Natural killer cell (primary cell): ENCODE measurements at regions of chr1 and their contacts with region 1.

Region 1: GRCh38 chr1:227486559-227486958 is 76.8 kb upstream of the ZNF678 start:
- DNase-seq: no peak
- ATAC-seq: no peak
- H3K4me3 ChIP-seq: no peak overlapping the region
- H3K4me3 Mint-ChIP-seq: no peak overlapping the region
- H3K27ac ChIP-seq: no peak overlapping the region
- H3K27ac Mint-ChIP-seq: no peak overlapping the region
- H3K4me1 ChIP-seq: no peaks in the 10 kb centered on the region
- H3K4me1 Mint-ChIP-seq: no peaks in the 10 kb centered on the region
- H3K27me3 ChIP-seq: peaks cover 4% of the 10 kb centered on the region
- H3K27me3 Mint-ChIP-seq: peaks cover 5 to 14% of the 10 kb centered on the region in 2 donors
- CTCF ChIP-seq: no peak

Region 2: DNA sequence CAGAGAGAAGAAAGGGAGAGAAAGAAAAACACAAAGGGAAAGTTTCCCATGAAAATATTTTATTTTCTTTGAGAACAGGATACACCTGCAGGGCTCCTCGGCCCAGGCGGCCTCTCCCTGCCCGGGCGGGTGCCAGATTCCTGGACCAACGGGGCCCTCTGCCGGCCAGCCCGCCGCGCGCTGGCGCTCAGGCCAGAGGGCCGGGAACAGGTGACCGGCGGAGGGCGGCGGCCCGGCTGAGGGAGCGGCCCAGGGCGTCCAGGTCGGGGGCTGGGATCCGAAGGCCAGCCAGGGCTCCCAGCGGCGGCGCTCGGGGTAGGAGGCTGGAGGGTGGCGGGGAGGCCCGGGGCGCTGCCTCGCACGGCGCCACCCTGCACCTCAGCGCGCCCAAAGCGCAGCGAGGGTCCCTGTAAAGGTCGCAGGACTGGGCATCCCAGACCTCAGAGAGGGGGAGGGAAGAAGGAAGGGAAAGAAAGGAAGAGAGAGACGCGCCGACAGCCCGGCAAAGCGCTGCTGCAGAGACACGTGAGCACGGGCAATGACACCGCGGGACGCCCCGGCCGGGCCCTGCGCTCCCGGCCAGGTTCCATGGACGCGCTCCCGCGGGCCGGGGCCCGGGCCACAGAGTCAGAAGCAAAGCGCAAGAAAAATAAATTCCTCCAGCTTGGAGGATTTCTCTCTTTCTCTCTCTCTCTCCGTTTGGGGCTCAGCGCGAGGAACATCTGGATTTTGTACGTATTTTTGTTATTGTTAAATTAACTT is 460.2 kb after region 1 on chr1:
- intact Hi-C with region 1: loop called (anchors 1 kb)
- DNase-seq: peak; percentile 39 to 74
- ATAC-seq: peak in 2 of 3 donors; percentile 72 to 83
- H3K4me3 ChIP-seq: no peak overlapping the region
- H3K4me3 Mint-ChIP-seq: peak overlapping the region; percentile 80
- H3K27ac ChIP-seq: no peak overlapping the region
- H3K27ac Mint-ChIP-seq: no peak overlapping the region
- H3K4me1 ChIP-seq: peaks cover 16% of the 10 kb centered on the region
- H3K4me1 Mint-ChIP-seq: peaks cover 8 to 16% of the 10 kb centered on the region in 2 donors
- H3K27me3 ChIP-seq: peaks cover 26% of the 10 kb centered on the region
- H3K27me3 Mint-ChIP-seq: peaks cover 22 to 44% of the 10 kb centered on the region in 2 donors
- CTCF ChIP-seq: peak; percentile 55

Region 3: GRCh38 chr1:227954163-227954850 is 467.7 kb after region 1 on chr1:
- intact Hi-C with region 1: loop called (anchors 2 kb)
- DNase-seq: no peak
- ATAC-seq: no peak
- H3K4me3 ChIP-seq: no peak overlapping the region
- H3K4me3 Mint-ChIP-seq: no peak overlapping the region
- H3K27ac ChIP-seq: no peak overlapping the region
- H3K27ac Mint-ChIP-seq: no peak overlapping the region
- H3K4me1 ChIP-seq: no peaks in the 10 kb centered on the region
- H3K4me1 Mint-ChIP-seq: no peaks in the 10 kb centered on the region
- H3K27me3 ChIP-seq: peaks cover 3% of the 10 kb centered on the region
- H3K27me3 Mint-ChIP-seq: peaks cover 28 to 35% of the 10 kb centered on the region in 2 donors
- CTCF ChIP-seq: peak; percentile 8

Region 4: DNA sequence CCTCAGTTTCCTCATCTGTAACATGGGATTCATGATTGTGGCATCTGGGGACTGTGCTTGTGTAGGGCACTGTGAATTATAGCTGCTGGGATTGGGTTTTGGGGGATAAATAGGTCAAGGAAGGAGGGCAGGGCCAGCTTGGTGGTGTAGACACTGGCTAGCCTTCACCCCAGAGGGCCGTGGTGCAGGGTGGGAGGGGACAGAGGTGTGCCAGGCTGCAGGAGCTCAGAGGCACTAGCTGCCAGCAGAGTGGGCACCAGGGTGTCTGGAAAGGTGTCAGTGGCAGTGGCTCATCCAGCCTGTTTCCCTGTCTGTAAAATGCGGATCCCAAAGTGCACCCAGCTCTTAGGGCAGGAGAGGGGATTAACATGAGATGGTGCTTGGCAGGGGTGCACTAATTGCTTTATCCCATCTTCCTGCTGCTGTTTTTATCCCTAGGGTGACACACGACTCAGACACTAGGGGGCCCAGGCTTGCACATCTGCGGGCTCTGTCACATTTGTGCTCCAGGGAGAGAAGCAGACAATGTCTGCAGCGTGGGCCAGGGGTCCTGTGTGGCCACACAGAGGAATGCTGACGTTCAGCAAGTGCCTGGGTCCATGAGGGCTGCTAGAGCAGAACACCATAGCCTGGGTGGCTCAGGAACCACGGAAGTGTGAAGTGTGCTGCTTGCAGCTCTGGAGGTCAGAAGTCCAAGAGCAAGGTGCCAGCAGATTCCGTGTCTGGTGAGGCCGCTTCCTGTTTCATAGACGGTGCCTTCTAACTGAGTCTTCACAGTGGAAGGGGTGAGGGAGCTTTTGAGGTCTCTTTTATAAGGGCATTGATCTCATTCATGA is 740.6 kb after region 1 on chr1:
- intact Hi-C with region 1: no loop called
- DNase-seq: no peak
- ATAC-seq: no peak
- H3K4me3 ChIP-seq: no peak overlapping the region
- H3K4me3 Mint-ChIP-seq: no peak overlapping the region
- H3K27ac ChIP-seq: no peak overlapping the region
- H3K27ac Mint-ChIP-seq: no peak overlapping the region
- H3K4me1 ChIP-seq: no peaks in the 10 kb centered on the region
- H3K4me1 Mint-ChIP-seq: no peaks in the 10 kb centered on the region
- H3K27me3 ChIP-seq: no peaks in the 10 kb centered on the region
- H3K27me3 Mint-ChIP-seq: no peaks in the 10 kb centered on the region
- CTCF ChIP-seq: no peak

Region 5: DNA sequence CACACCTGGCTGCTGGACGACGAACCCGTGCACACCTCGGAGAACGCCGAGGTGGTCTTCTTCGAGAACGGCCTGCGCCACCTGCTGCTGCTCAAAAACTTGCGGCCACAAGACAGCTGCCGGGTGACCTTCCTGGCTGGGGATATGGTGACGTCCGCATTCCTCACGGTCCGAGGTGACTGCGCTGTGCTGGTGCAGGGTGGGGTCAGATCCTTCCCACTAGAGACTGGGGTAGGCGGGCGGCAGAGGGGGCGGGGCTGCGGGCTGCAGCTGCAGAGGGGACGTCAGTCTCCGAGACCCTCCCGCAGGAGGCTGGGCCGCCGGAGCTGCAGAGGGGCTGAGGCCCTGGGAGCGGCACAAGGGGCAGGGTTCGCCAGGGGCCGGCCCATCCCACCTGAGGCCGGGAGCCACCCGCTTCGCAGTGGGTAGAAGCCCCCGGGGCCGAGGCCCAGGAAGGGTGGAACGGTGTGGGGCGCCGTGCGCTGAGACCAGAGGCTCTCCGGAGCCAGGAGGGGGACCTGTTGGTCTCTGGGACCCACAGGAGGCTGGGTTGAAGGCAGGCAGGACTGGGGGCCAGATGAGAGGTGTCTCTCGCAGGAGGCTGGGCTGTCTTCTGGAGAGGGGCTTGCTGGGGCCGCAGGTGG is 829.5 kb after region 1 on chr1:
- intact Hi-C with region 1: no loop called
- DNase-seq: peak in 1 of 2 donors; percentile 11
- ATAC-seq: no peak
- H3K4me3 ChIP-seq: no peak overlapping the region
- H3K4me3 Mint-ChIP-seq: no peak overlapping the region
- H3K27ac ChIP-seq: no peak overlapping the region
- H3K27ac Mint-ChIP-seq: no peak overlapping the region
- H3K4me1 ChIP-seq: no peaks in the 10 kb centered on the region
- H3K4me1 Mint-ChIP-seq: no peaks in the 10 kb centered on the region
- H3K27me3 ChIP-seq: no peaks in the 10 kb centered on the region
- H3K27me3 Mint-ChIP-seq: no peaks in the 10 kb centered on the region
- CTCF ChIP-seq: no peak